Posterior cingulate gyrus (tissue), 11 donors: ENCODE measurements at regions of chr4 and their contacts with region 1.

Region 1: GRCh38 chr4:85084380-85085094 is 118.0 kb upstream of the WDFY3 start:
- DNase-seq: peak in 2 of 10 donors; percentile 11 to 30

Region 2: DNA sequence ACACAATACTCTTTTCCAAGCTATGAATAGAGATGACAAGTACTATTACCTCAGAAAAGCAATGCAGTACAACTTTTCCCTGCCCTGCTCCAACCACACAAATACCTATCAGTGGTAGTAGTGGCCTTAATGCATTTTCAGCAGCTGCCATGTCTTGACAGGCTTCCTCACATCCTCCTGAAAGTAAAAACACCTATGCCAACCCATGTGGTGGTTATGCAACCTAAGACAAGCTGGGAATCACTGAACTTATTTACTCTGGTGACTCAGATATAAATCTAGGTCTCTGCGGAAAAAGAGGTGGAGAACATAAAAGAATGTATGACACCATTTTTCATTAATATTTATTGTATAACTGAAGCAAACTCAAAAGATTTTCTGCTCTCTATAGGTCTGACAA is 132.5 kb before region 1 on chr4:
- intact Hi-C with region 1: no loop called
- DNase-seq: no peak

Region 3: DNA sequence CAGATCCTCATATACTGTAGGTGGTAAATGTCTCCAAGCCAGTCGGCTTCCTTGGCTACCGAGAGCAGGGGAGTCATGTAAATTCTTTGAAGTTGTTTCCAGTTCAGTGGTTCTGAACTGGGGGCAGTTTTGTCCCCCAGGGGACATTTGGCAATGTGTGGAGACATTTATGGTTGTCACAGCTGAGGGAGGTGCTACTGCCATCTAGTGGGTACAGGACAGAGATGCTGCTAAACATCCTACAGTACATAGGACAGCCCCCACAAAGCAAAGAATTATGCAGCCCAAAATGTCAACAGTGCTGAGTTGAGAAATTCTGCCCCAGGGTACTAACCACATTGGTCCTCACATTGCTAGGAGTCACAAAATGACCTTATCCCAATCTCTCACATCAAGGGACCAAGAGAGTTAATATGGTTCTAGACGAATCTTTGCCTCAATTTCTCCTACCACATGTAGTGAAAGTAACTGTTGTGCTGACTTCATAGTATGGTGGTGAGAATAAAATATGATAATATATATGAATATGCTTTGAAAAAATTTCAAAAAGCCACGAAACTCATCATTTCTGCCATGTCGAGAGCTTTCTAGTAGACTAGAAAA is 286.0 kb after region 1 on chr4:
- intact Hi-C with region 1: loop called (anchors 2 kb)
- DNase-seq: peak in 4 of 10 donors; percentile 3 to 24 (median 10)

Region 4: GRCh38 chr4:85747882-85748491 is 663.5 kb after region 1 on chr4:
- intact Hi-C with region 1: loop called (anchors 5 kb)
- DNase-seq: peak in 2 of 10 donors; percentile 39 to 53

Region 5: DNA sequence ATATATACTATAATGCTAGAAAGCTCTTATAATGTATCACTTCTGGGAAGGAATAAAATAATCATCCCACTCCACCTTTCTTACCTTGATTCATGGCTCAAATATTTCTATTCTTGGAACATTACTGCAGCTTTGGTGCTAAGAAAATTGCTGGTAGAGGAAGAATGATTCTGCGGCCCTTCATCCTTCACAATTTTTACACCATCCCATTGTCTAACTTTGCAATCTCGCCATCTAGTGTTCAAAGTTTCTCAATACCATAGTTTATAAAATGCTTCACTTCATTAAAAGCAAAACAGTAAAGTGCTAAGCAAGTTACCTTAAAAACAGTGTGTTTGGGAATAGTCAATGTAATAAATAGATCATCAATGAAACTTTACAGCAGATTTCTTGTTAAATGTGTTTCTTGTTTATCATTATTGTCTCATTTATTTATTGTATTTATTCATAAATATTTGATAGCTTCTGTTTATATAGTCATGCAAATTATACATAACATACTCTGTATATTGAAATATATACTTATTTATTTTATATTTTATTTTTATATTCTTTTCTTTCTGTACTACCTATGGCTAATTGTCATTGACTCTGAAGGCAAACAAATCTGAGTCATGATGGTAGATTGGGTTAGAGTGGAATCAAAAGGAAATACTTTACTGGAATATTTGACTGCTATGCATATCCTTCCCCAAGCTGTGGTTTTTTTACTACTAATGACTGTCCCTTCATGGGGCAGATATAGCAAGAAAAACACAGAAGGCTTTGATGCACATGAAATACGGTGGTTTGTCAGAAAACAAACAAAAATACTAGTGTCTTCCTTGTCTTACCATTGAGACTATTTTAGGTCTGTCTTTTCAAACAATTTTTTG is 884.6 kb after region 1 on chr4:
- intact Hi-C with region 1: loop called (anchors 10 kb)
- DNase-seq: no peak